HEK293T (cell line): ENCODE measurements at regions of chr4 and their contacts with region 1.

Region 1: DNA sequence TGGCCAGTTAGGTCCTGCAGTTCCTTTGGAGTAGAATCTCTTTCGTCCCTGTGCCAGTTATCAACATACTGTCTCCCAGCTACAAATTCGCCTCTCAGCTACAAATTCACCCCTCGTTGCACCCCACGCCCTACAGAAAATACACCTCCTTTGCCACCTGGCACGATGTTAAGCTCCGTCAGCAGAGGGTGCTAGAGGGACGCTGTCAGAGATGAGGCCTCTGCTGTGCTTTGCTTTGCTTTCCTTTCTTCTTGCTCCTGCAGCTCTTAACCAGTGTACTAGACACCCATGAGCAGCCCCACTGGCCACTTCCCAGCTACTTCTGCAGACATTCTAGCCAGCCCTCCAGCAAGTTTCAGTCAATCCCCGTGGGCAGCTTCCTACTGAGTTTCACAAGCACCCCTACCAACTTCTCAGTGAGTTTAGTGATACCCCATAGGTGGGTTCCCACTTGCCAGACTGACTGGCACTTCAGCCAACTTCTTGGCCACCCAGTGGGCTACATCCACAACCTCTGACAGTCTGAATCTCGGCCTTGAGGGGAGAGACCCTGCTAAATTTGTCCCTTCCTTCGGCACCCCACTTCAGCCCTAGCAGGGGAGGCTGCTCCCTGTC is 21.8 kb downstream of the HAUS3 start:
- DNase-seq: peak; percentile 79

Region 2: GRCh38 chr4:1899149-1900086 is 320.7 kb before region 1 on chr4:
- CTCF ChIA-PET with region 1: no interaction called
- POLR2A ChIA-PET with region 1: no interaction called
- DNase-seq: peak; percentile 91

Region 3: GRCh38 chr4:2236944-2237666 is 17.0 kb after region 1 on chr4:
- CTCF ChIA-PET with region 1: interaction called, 14 read pairs
- POLR2A ChIA-PET with region 1: interaction called, 8 read pairs
- DNase-seq: no peak

Region 4: DNA sequence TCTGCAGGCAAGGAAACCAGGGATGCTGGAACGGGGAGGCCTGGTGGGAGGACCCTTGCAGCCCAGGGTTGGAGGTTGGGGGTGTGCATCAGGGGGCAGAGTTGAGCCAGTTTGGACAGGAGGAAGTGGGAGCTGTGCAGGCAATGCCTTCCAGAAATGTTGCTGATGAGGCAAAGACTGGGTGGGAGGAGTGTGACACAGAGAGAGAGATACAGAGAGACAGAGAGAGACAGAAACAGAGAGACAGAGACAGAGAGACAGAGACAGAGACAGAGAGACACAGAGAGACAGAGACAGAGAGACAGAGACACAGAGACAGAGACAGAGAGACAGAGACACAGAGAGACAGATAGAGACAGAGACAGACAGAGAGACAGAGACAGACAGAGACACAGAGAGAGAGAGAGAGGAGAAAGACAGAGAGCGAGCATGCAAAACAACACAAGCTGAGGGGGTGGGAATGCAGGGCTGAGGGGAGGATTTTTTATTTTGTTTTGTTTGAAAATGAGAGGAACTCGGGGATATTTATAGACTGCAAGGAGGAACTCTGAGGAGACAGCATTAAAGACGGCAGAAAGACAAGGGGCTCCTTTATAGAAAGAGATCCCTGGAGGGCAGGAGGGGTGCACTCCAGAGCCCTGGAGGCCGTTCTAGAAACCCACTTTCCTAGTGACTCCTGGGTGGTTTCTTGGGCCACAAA is 23.7 kb after region 1 on chr4:
- CTCF ChIA-PET with region 1: interaction called, 14 read pairs
- POLR2A ChIA-PET with region 1: interaction called, 8 read pairs
- DNase-seq: peak; percentile 20

Region 5: GRCh38 chr4:2269206-2269531 is 49.0 kb after region 1 on chr4:
- CTCF ChIA-PET with region 1: no interaction called
- POLR2A ChIA-PET with region 1: no interaction called
- DNase-seq: no peak

Region 6: DNA sequence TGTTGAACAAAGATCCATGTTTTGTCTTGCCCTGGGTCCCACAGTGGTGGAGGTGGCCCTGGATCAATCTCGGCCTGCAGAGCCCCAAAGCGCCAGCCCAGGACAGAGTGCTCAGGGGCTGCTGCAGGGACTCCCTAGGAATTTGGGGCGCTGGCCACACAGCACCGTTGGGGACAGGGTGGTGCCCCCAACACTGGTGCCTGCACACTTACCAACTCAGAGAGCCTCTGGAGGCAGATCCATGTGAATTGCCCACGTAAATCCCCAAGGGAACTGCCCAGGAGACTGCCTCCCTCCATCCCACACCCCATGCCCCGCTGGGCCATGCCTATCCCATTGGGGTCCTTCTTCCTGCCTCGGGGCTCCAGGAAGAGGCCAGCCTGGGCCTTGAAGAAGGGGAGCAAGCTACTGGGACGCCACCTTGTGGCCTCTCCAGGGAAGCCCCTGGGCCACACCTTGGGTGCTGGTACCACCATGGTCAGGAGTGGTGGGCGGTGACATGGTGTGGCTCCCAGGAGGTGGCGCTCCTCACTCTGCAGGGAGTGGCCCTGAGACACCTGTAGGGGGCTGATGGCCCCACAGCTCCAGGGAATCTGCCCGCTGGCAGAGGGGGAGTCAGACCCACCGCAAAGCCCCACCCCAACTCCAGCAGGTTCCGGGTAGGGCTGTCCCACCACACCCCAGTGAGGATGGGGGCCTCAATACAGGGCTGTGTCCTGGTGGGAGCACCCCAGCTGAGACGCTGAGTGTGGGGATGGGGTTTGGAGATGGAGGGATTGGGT is 221.5 kb after region 1 on chr4:
- CTCF ChIA-PET with region 1: interaction called, 18 read pairs
- POLR2A ChIA-PET with region 1: no interaction called
- DNase-seq: peak; percentile 91